ENCODE measurements at regions of chr15 and their contacts with region 1.

Region 1: DNA sequence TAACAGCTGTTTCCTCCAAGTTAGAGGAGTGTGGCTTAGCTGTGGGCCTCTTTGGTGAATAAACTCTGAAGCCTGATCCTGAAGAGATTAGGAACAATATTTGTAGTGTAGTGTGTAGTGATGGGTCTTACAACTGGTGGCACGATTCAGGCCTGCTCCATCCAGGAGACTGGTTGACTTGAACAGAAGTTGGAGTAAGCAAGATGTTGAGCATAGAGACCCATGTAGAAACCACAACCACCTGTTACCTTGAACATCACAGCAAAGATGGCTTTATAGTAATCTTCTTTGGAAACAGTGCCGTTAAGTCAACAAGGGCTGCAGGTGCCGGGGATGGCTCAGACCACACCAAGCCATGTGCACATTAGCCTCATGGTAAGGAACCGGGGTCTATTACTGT is 74.2 kb upstream of the RASGRP1 start:
- DNase-seq: no peak
- ATAC-seq: no peak
- H3K4me3 Mint-ChIP-seq: no peak overlapping the region
- H3K27ac Mint-ChIP-seq: peak overlapping the region; percentile 28
- H3K4me1 Mint-ChIP-seq: peaks cover 43% of the 10 kb centered on the region
- H3K27me3 Mint-ChIP-seq: no peaks in the 10 kb centered on the region

Region 2: GRCh38 chr15:38665586-38666305 is 26.9 kb after region 1 on chr15:
- CTCF ChIA-PET with region 1: interaction called, 4 read pairs
- POLR2A ChIA-PET with region 1: no interaction called
- intact Hi-C with region 1: loop called in 1 of 2 experiments (anchors 2 kb)
- DNase-seq: no peak
- ATAC-seq: peak; percentile 37
- H3K4me3 Mint-ChIP-seq: no peak overlapping the region
- H3K27ac Mint-ChIP-seq: peak overlapping the region; percentile 83
- H3K4me1 Mint-ChIP-seq: peaks cover 89% of the 10 kb centered on the region
- H3K27me3 Mint-ChIP-seq: no peaks in the 10 kb centered on the region

Region 3: GRCh38 chr15:38745126-38745525 is 106.3 kb after region 1 on chr15:
- CTCF ChIA-PET with region 1: no interaction called
- POLR2A ChIA-PET with region 1: no interaction called
- intact Hi-C with region 1: no loop called
- DNase-seq: no peak
- ATAC-seq: no peak
- H3K4me3 Mint-ChIP-seq: no peak overlapping the region
- H3K27ac Mint-ChIP-seq: no peak overlapping the region
- H3K4me1 Mint-ChIP-seq: no peaks in the 10 kb centered on the region
- H3K27me3 Mint-ChIP-seq: peaks cover 4% of the 10 kb centered on the region

Measured in activated CD4-positive, alpha-beta T cell treated with anti-CD3 and anti-CD28 coated beads for 36 hours (primary cell).